Right ventricle myocardium inferior (tissue), 1 donor: ENCODE measurements at regions of chr18 and their contacts with region 1.

Region 1: DNA sequence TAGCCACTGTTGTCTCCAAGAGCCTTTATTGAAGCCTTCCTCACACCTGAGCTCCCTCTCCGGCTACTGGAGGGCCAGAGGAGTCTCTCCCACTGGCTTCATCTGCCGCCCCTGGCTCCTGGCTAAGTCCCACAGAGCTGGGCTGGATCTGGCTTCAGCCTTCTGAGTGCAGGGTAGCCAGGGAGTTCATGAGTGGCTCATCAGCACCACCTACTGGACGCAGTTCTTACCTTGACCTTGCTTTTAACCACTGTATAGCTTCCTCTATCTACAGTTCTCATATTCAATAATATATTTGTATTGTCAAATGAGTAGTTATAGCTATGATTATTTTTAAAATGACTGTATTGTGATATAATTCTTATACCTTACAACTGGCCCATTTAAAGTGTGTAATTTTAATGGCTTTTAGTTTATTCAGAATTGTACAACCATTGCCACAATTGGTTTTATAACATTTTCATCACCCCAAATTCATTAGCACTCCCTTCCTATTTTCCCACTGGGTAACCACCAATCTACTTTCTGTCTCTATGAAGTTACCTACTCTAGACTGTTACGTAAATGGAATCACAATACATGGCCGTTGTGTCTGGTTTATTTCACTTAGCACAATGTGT is 17.7 kb downstream of the CNDP1 start:
- DNase-seq: peak; percentile 72
- ATAC-seq: peak; percentile 97

Region 2: GRCh38 chr18:74196220-74197119 is 355.6 kb before region 1 on chr18:
- intact Hi-C with region 1: loop called (anchors 5 kb)
- DNase-seq: no peak
- ATAC-seq: peak; percentile 61